Adrenal gland (tissue), 19 donors: ENCODE measurements at regions of chr4 and their contacts with region 1.

Region 1: GRCh38 chr4:1910643-1911042 is 39.5 kb downstream of the NSD2 start:
- DNase-seq: peak; percentile 33 to 74 (median 48)
- H3K4me3 ChIP-seq: no peak overlapping the region
- H3K27ac ChIP-seq: no peak overlapping the region
- H3K4me1 ChIP-seq: no peaks in the 10 kb centered on the region
- H3K27me3 ChIP-seq: no peaks in the 10 kb centered on the region
- CTCF ChIP-seq: peak; percentile 29 to 55 (median 54)
- POLR2A ChIP-seq: no peak

Region 2: GRCh38 chr4:1711571-1712215 is 198.9 kb before region 1 on chr4:
- intact Hi-C with region 1: no loop called
- DNase-seq: peak; percentile 67 to 86 (median 77)
- H3K4me3 ChIP-seq: peak overlapping the region; percentile 42 to 100 (median 66)
- H3K27ac ChIP-seq: peak overlapping the region; percentile 93 to 100 (median 98)
- H3K4me1 ChIP-seq: peaks cover 18 to 39% of the 10 kb centered on the region in 2 donors
- H3K27me3 ChIP-seq: no peaks in the 10 kb centered on the region
- CTCF ChIP-seq: no peak
- POLR2A ChIP-seq: no peak

Region 3: DNA sequence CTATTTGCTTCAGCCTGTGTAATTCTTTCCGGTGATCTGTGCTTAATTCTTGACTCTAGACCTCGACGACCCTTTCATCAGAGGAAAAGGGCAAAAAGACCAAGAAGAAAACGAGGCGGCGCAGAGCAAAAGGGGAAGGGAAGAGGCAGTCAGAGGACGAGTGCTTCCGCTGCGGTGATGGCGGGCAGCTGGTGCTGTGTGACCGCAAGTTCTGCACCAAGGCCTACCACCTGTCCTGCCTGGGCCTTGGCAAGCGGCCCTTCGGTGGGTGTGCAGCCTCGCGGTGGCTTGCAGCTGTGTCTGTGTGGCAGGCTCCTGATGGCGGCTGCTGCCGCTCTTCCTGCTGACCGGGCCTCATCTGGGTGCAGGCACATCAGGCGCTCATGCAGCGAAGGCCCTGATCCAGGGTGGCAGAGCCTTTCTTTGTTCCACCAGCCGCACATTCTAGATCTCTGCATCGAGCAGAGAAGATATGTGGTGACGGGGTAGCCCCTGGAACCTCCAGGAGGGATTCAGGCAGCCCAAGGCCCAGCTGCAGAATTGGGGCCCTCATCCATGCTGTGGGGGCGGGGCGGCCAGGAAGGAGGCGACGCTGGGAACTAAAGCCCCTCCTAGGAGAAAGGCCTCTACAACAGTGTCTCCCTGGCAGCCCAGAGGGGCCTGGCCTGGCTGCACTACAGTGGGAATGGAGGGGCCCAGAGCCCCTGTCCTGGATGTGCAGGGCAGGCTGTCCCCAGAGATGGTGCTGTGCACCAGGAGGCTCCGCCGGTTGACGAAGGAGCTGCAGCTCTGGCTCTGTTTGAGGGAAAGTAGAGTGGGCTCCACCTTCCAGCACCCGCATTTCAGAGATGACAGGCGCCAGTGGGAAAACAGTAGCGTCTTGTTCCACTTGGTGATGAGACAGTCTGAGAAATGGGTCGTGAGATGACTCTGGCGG is 66.0 kb after region 1 on chr4:
- intact Hi-C with region 1: no loop called
- DNase-seq: peak in 1 of 7 donors; percentile 39
- H3K4me3 ChIP-seq: no peak overlapping the region
- H3K27ac ChIP-seq: no peak overlapping the region
- H3K4me1 ChIP-seq: no peaks in the 10 kb centered on the region
- H3K27me3 ChIP-seq: no peaks in the 10 kb centered on the region
- CTCF ChIP-seq: no peak
- POLR2A ChIP-seq: no peak

Region 4: GRCh38 chr4:2008875-2009703 is 98.4 kb after region 1 on chr4 and contains the start of gene NELFA:
- intact Hi-C with region 1: loop called in 1 of 2 experiments (anchors 10 kb)
- DNase-seq: peak; percentile 94 to 98 (median 97)
- H3K4me3 ChIP-seq: peak within 1 kb of the TSS; percentile 68 to 100 (median 88)
- H3K27ac ChIP-seq: peak within 1 kb of the TSS; percentile 89 to 100 (median 96)
- H3K4me1 ChIP-seq: peaks cover 9 to 32% of the 10 kb centered on the region in 2 donors
- H3K27me3 ChIP-seq: no peaks in the 10 kb centered on the region
- CTCF ChIP-seq: peak in 5 of 6 experiments; percentile 43 to 78 (median 61)
- POLR2A ChIP-seq: peak; percentile 73 to 89
- total RNA-seq, gene NELFA: 13.5 to 50.3 (median 23.8) TPM